Left cardiac atrium (tissue), 4 donors: ENCODE measurements at regions of chr4 and their contacts with region 1.

Region 1: GRCh38 chr4:55345980-55346850 is at the start of gene SRD5A3:
- DNase-seq: peak; percentile 89
- ATAC-seq: peak; percentile 97 to 98
- total RNA-seq, gene SRD5A3: 10.9 to 13.5 TPM

Region 2: GRCh38 chr4:55395529-55396307 is 49.5 kb after region 1 on chr4 and contains the start of gene TMEM165:
- intact Hi-C with region 1: loop called in 1 of 2 experiments (anchors 5 kb)
- DNase-seq: peak; percentile 94
- ATAC-seq: peak; percentile 96 to 97
- total RNA-seq, gene TMEM165: 54.6 to 101 TPM

Region 3: GRCh38 chr4:55534306-55534705 is 188.1 kb after region 1 on chr4:
- intact Hi-C with region 1: no loop called
- DNase-seq: no peak
- ATAC-seq: no peak

Region 4: DNA sequence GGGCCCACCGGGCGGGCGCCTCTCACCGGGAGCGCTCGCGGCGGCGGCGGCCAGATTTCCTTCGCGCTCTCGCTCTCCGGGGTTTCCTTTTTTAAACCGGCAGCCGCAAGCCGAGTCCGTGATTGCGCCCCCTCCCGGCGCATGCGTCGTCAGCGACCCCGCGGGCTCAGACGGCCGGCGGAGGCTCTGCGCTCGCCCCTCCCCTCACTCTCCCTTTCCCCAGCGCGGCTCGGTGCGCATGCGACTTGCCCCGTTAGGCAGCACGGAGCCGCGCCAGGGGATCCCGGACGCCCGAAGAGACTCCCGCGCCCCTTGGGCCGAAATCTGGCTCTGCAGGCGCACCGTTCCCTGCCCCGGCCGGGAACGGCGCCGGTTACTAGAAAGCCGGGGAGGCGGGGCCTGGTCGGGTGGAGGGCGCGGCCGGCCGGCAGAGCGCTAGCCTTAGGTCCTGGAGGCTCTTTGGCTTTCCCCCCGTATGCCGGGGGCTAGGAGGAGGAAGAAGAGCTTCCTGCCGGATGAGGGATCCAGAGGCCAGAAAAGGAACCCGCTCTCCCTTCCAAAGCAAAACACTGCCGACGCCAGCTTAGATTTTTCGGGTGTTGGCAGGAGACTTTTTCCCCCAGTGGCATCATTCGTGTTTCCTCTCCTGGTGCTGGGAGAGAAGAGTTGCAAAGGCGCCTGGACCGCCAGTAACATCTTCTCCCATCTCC is 200.7 kb after region 1 on chr4 and contains the start of gene CLOCK:
- intact Hi-C with region 1: loop called (anchors 5 kb)
- DNase-seq: peak; percentile 92
- ATAC-seq: peak; percentile 90 to 93
- total RNA-seq, gene CLOCK: 26.8 to 33.5 TPM

Region 5: DNA sequence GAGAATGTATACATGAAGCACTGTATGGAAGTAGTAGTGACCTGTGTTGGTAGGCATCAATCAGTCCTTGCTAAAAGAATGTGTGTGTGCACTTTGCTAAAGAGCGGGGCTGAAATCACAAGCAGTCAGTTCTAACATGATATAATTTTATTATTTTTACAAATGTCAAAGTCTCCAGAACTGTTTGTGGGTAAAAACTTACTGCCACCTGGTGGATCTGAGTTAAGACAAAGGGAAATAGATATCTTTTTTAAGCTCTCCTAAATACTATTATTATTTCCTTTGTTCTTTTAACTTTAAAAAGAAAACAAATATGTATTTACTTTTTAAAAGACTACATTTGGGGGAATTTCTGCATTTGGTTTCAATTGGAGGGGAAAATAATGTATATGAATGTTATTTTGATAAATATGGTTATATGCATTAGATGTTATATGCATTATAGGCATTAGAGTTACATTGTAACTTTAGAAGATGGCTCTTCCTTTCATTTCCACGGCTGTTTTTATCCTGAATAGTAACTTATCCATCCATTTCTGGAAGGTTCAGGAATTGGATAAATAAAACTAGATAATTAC is 208.3 kb after region 1 on chr4:
- intact Hi-C with region 1: loop called (anchors 5 kb)
- DNase-seq: no peak
- ATAC-seq: peak in 1 of 2 donors; percentile 56

Region 6: GRCh38 chr4:55853484-55854046 is 507.4 kb after region 1 on chr4 and contains the start of gene EXOC1:
- intact Hi-C with region 1: loop called in 1 of 2 experiments (anchors 10 kb)
- DNase-seq: peak; percentile 99
- ATAC-seq: peak; percentile 100
- total RNA-seq, gene EXOC1: 22.4 to 22.5 TPM